ENCODE measurements at regions of chr1 and their contacts with region 1.

Region 1: GRCh38 chr1:54052934-54053744 is at the starts of genes TCEANC2 and TMEM59:
- DNase-seq: peak; percentile 98
- ATAC-seq: peak; percentile 93
- H3K4me3 ChIP-seq: peak within 1 kb of the TSS; percentile 93
- H3K27ac ChIP-seq: peak within 1 kb of the TSS; percentile 38
- H3K4me1 ChIP-seq: peaks cover 20% of the 10 kb centered on the region
- H3K27me3 ChIP-seq: no peaks in the 10 kb centered on the region
- CTCF ChIP-seq: no peak
- total RNA-seq, gene TCEANC2: 4.2 and 7.7 TPM in 2 replicates
- total RNA-seq, gene TMEM59: 71.5 and 133 TPM in 2 replicates

Region 2: DNA sequence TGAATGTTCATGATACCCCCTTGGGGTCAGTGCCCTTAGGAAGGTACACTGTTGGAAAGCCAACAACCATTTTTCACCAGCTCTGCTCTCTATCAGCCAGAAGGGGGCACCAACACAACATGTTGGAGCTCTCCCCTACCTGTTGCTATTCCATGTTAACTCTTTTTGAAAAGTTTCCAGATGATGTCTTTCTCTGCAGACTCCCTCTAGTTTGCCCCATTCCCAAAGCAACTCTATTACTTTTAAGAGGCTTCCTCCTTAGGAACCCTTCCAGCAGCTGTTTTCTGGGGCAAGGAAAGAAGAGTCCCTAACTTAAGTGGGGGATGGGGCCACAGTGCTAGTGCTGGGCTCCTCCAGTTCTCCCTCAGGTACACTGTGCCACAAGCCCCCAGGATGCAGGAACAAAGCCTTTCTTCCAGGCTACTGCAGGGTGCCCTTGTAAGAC is 192.2 kb before region 1 on chr1:
- CTCF ChIA-PET with region 1: no interaction called
- POLR2A ChIA-PET with region 1: no interaction called
- intact Hi-C with region 1: loop called (anchors 10 kb)
- DNase-seq: peak; percentile 78
- ATAC-seq: peak; percentile 90
- H3K4me3 ChIP-seq: no peak overlapping the region
- H3K27ac ChIP-seq: no peak overlapping the region
- H3K4me1 ChIP-seq: no peaks in the 10 kb centered on the region
- H3K27me3 ChIP-seq: no peaks in the 10 kb centered on the region
- CTCF ChIP-seq: peak; percentile 93

Region 3: GRCh38 chr1:53945433-53946251 is 107.5 kb before region 1 on chr1 and contains the start of gene IFT25:
- CTCF ChIA-PET with region 1: no interaction called
- POLR2A ChIA-PET with region 1: no interaction called
- intact Hi-C with region 1: loop called (anchors 5 kb)
- DNase-seq: peak; percentile 95
- ATAC-seq: peak; percentile 74
- H3K4me3 ChIP-seq: peak within 1 kb of the TSS; percentile 96
- H3K27ac ChIP-seq: peak within 1 kb of the TSS; percentile 23; the same call in 1 of the 2 replicates
- H3K4me1 ChIP-seq: peaks cover 46% of the 10 kb centered on the region
- H3K27me3 ChIP-seq: no peaks in the 10 kb centered on the region
- CTCF ChIP-seq: no peak
- total RNA-seq, gene IFT25: 49.7 and 66.7 TPM in 2 replicates

Region 4: GRCh38 chr1:53968125-53968513 is 85.0 kb before region 1 on chr1:
- CTCF ChIA-PET with region 1: no interaction called
- POLR2A ChIA-PET with region 1: no interaction called
- intact Hi-C with region 1: loop called (anchors 5 kb)
- DNase-seq: peak; percentile 86
- ATAC-seq: peak; percentile 91
- H3K4me3 ChIP-seq: no peak overlapping the region
- H3K27ac ChIP-seq: peak overlapping the region; percentile 5; the same call in 1 of the 2 replicates
- H3K4me1 ChIP-seq: peaks cover 42% of the 10 kb centered on the region
- H3K27me3 ChIP-seq: no peaks in the 10 kb centered on the region
- CTCF ChIP-seq: no peak

Region 5: DNA sequence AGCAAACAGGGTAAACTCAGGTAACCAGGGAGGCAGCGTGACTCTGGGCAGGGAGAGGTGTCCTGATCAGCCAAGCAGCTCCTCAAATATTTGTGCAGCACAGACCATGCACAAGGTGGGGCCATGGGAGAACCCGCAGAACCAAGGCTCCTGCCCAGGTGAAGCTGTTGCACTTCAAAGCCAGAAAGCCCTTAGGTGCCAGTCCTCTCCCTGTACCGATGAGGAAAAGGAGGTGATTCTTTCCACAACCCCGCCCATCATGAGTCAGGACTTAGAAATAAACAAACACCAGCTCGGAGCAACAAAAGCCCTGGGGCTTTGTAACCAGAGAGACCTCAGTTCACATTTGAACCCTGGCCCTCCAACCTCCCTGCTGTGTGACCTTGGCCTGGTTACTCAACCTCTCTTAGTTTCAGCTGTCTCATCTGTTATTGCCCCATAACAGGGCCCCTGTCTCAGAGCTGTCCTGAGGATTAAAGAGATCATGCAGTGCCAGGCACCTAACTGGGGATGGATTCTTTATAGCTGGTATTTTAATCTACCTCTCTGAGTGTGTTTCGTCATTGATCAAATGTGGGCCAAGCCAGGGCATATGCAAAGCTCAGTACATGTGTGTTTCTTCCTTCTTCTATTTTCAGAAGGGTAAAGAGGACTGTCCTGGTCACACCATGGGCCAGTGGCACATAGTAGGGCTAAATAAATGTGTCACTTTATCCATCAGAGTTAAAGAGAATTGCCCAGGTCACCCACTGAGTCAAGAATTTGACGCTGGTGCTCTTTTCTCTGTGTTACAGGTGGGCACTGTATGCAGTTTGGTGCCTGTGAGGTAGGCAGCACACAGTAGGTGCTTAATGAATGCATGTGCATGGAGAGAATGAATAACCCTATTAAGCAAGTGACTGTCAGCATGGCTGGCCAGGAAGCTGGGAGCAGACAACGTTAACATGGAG is 36.6 kb before region 1 on chr1:
- CTCF ChIA-PET with region 1: no interaction called
- POLR2A ChIA-PET with region 1: no interaction called
- intact Hi-C with region 1: loop called (anchors 2 kb)
- DNase-seq: peak; percentile 92
- ATAC-seq: peak; percentile 89
- H3K4me3 ChIP-seq: no peak overlapping the region
- H3K27ac ChIP-seq: peak overlapping the region; percentile 62
- H3K4me1 ChIP-seq: peaks cover 10% of the 10 kb centered on the region
- H3K27me3 ChIP-seq: no peaks in the 10 kb centered on the region
- CTCF ChIP-seq: no peak

Region 6: DNA sequence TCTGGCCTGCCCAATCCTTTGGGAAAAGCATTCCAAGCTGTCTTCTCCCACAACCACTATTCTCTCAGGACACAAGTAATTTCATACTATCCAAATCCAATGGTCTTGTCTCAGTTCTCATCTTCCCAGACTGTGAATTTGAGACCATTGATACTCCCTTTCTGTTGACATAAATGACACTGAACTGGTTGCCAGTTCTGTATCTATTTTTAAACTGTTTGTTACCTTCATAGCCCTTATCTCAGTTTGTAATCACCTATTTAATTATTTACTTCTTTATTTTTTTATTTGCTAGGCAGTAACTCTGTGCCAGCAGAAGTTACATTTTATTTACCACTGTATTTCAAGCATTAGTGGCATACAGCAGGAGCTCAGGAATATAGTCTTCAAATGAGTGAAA is 24.2 kb after region 1 on chr1:
- CTCF ChIA-PET with region 1: no interaction called
- POLR2A ChIA-PET with region 1: no interaction called
- intact Hi-C with region 1: no loop called
- DNase-seq: no peak
- ATAC-seq: no peak
- H3K4me3 ChIP-seq: no peak overlapping the region
- H3K27ac ChIP-seq: no peak overlapping the region
- H3K4me1 ChIP-seq: peaks cover 3% of the 10 kb centered on the region; the same call in 1 of the 2 replicates
- H3K27me3 ChIP-seq: no peaks in the 10 kb centered on the region
- CTCF ChIP-seq: no peak

Measured in PC-3 (cell line).